ENCODE measurements at regions of chr15 and their contacts with region 1.

Region 1: DNA sequence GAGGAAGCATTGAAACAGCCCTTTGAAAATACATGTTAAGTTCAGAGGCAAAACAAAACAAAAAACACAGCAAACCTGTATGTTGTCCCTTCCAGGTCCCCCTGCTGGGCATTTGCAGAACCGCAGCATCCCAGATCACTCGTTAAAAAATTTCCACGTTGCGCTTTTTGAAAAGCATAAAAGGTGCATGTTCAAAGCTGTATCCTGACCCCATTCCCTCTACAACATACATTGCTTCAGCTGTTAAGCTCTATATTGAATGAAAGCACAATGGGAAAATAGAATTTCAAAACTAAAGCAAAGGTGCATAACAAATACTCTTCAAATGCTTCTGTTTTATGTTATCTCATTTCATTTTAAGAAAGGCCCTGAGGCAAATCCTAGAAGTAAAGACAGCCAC is 328.3 kb downstream of the THSD4 start:
- DNase-seq: peak; percentile 53 to 61
- H3K4me3 ChIP-seq: no peak overlapping the region
- H3K27ac ChIP-seq: no peak overlapping the region
- H3K4me1 ChIP-seq: peaks cover 0 to 3% of the 10 kb centered on the region in 2 donors
- H3K27me3 ChIP-seq: no peaks in the 10 kb centered on the region
- CTCF ChIP-seq: peak; percentile 63 to 86 (median 76)
- POLR2A ChIP-seq: no peak

Region 2: DNA sequence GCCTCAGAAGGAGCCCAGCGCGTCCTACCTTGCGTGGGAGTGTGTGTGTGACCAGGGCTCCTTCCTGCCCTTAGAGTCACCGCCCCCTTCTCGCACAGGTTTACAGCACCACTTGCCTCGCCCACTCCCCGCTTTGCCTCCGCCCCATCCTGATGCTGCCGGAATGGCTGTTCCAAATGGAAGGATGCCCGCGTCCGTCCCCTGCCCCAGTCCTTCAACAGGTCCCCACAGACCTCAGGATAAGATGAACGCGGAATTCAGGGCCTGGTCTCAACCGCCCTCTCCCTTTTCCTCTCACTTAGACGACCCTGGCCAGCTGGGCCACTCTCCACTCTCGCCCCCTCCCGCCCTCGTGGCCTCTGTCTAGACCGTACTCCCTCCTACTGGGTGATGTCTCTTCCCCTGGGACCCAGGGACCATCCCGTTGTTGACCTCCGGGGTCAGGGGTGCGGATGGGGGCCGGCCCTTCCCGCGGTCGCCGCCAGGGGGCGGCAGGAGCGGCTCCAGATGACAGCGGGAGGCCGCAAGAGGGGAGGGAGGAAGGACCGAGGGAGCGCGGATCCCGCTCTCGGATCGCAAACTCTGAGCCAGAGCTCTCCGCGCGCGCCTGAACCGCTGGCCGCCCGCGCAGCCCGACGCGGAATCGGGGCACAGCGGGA is 328.5 kb before region 1 on chr15 and contains the start of gene THSD4:
- intact Hi-C with region 1: loop called (anchors 5 kb)
- DNase-seq: peak; percentile 92
- H3K4me3 ChIP-seq: peak within 1 kb of the TSS; percentile 35 to 47 (median 39)
- H3K27ac ChIP-seq: peak within 1 kb of the TSS; percentile 70 to 89 (median 82)
- H3K4me1 ChIP-seq: peaks cover 11 to 38% of the 10 kb centered on the region in 2 donors
- H3K27me3 ChIP-seq: no peaks in the 10 kb centered on the region
- CTCF ChIP-seq: peak; percentile 95 to 98 (median 97)
- POLR2A ChIP-seq: peak in 1 of 2 donors; percentile 64
- total RNA-seq, gene THSD4: 23.0 to 68.5 (median 48.6) TPM